BJ (cell line): ENCODE measurements at regions of chr21 and their contacts with region 1.

Region 1: GRCh38 chr21:36747815-36748383 is 49.0 kb downstream of the SIM2 start:
- DNase-seq: no peak
- H3K4me3 ChIP-seq: peak overlapping the region; percentile 34
- H3K27me3 ChIP-seq: peaks cover 9% of the 10 kb centered on the region
- CTCF ChIP-seq: 0 out of 2 replicates have a peak, but pooled peaks have one; percentile 13

Region 2: GRCh38 chr21:36735724-36736325 is 12.1 kb before region 1 on chr21:
- CTCF ChIA-PET with region 1: interaction called, 14 read pairs
- POLR2A ChIA-PET with region 1: no interaction called
- DNase-seq: no peak
- H3K4me3 ChIP-seq: no peak overlapping the region
- H3K27me3 ChIP-seq: peaks cover 13% of the 10 kb centered on the region
- CTCF ChIP-seq: no peak

Region 3: GRCh38 chr21:36799869-36800268 is 52.0 kb after region 1 on chr21:
- CTCF ChIA-PET with region 1: no interaction called
- POLR2A ChIA-PET with region 1: no interaction called
- DNase-seq: no peak
- H3K4me3 ChIP-seq: no peak overlapping the region
- H3K27me3 ChIP-seq: no peaks in the 10 kb centered on the region
- CTCF ChIP-seq: no peak

Region 4: GRCh38 chr21:36917471-36918158 is 169.7 kb after region 1 on chr21:
- CTCF ChIA-PET with region 1: interaction called, 13 read pairs
- POLR2A ChIA-PET with region 1: no interaction called
- DNase-seq: no peak
- H3K4me3 ChIP-seq: no peak overlapping the region
- H3K27me3 ChIP-seq: no peaks in the 10 kb centered on the region
- CTCF ChIP-seq: peak; percentile 69